ENCODE measurements at regions of chr3 and their contacts with region 1.

Region 1: GRCh38 chr3:87350364-87351199 is 74.2 kb upstream of the POU1F1 start:
- DNase-seq: peak; percentile 38
- H3K4me3 ChIP-seq: no peak overlapping the region
- H3K27ac ChIP-seq: no peak overlapping the region
- H3K4me1 ChIP-seq: no peaks in the 10 kb centered on the region
- H3K27me3 ChIP-seq: no peaks in the 10 kb centered on the region
- CTCF ChIP-seq: peak; percentile 83 to 91

Region 2: DNA sequence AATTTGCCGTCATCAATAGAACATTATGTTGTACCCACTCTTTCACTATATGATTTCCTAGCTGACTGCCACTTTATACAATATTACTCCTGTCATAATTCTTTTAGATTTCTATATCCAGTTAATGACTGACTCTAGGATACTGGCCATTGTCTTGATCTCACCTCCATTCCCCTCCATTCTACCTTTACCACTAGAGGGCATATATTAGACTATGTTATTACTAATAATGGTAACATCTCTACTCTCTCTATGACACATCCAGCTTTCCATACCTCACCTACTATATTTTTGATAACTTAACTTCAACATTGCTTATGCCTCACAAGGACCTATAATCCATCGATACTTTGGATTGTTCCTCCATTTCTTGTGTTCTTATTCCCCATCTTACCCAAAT is 42.8 kb before region 1 on chr3:
- CTCF ChIA-PET with region 1: no interaction called
- dilution Hi-C with region 1: no loop called
- in situ Hi-C with region 1: no loop called
- intact Hi-C with region 1: loop called (anchors 2 kb)
- DNase-seq: peak; percentile 22
- H3K4me3 ChIP-seq: no peak overlapping the region
- H3K27ac ChIP-seq: no peak overlapping the region
- H3K4me1 ChIP-seq: peaks cover 16% of the 10 kb centered on the region
- H3K27me3 ChIP-seq: no peaks in the 10 kb centered on the region
- CTCF ChIP-seq: peak; percentile 40 to 44

Region 3: DNA sequence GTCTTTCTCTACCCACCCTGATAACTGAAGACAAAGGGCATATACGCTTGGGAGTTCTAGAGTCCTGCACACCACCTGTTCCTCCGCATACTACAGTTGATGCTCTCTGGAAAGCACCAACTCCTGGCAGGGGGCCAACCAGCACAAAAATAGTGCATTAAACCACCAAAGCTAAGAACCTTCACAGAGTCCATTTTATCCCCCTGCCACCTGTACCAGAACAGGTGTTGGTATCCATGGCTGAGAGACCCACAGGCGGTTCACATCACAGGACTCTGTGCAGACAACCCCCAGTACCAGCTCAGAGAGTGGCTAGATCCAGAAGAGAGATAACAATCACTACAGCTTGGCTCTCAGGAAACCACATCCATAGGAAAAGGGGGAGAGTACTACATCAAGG is 40.2 kb after region 1 on chr3:
- CTCF ChIA-PET with region 1: no interaction called
- dilution Hi-C with region 1: no loop called
- in situ Hi-C with region 1: no loop called
- intact Hi-C with region 1: no loop called
- DNase-seq: no peak
- H3K4me3 ChIP-seq: no peak overlapping the region
- H3K27ac ChIP-seq: no peak overlapping the region
- H3K4me1 ChIP-seq: no peaks in the 10 kb centered on the region
- H3K27me3 ChIP-seq: no peaks in the 10 kb centered on the region
- CTCF ChIP-seq: no peak

Region 4: DNA sequence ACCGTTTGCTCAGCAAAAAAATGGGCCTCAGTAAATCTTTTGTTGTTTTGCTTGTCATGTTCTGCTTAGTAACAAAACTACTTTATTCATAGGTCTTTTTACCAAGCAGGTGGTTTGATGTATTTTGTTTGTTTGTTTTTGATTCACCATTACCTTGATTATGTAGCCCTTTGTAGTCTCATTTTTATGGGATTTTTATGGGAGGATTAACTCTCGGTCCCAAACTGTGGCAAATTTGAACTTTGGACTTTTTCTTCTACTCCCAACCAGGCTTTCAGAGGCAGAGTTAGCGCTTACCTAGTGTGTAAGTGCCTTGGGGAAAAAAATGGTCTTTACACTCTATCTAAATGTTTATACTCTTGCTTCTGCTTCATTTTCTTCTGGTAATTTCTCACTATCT is 202.5 kb after region 1 on chr3:
- CTCF ChIA-PET with region 1: no interaction called
- dilution Hi-C with region 1: no loop called
- in situ Hi-C with region 1: no loop called
- intact Hi-C with region 1: no loop called
- DNase-seq: no peak
- H3K4me3 ChIP-seq: no peak overlapping the region
- H3K27ac ChIP-seq: no peak overlapping the region
- H3K4me1 ChIP-seq: no peaks in the 10 kb centered on the region
- H3K27me3 ChIP-seq: no peaks in the 10 kb centered on the region
- CTCF ChIP-seq: no peak

Region 5: GRCh38 chr3:88180398-88180999 is 829.9 kb after region 1 on chr3:
- CTCF ChIA-PET with region 1: no interaction called
- dilution Hi-C with region 1: no loop called
- in situ Hi-C with region 1: no loop called
- intact Hi-C with region 1: loop called (anchors 2 kb)
- DNase-seq: peak; percentile 37
- H3K4me3 ChIP-seq: no peak overlapping the region
- H3K27ac ChIP-seq: no peak overlapping the region
- H3K4me1 ChIP-seq: no peaks in the 10 kb centered on the region
- H3K27me3 ChIP-seq: no peaks in the 10 kb centered on the region
- CTCF ChIP-seq: peak; percentile 20 to 52

Measured in mammary epithelial cell (primary cell).